Naive thymus-derived CD8-positive, alpha-beta T cell (primary cell): ENCODE measurements at regions of chr11 and their contacts with region 1.

Region 1: DNA sequence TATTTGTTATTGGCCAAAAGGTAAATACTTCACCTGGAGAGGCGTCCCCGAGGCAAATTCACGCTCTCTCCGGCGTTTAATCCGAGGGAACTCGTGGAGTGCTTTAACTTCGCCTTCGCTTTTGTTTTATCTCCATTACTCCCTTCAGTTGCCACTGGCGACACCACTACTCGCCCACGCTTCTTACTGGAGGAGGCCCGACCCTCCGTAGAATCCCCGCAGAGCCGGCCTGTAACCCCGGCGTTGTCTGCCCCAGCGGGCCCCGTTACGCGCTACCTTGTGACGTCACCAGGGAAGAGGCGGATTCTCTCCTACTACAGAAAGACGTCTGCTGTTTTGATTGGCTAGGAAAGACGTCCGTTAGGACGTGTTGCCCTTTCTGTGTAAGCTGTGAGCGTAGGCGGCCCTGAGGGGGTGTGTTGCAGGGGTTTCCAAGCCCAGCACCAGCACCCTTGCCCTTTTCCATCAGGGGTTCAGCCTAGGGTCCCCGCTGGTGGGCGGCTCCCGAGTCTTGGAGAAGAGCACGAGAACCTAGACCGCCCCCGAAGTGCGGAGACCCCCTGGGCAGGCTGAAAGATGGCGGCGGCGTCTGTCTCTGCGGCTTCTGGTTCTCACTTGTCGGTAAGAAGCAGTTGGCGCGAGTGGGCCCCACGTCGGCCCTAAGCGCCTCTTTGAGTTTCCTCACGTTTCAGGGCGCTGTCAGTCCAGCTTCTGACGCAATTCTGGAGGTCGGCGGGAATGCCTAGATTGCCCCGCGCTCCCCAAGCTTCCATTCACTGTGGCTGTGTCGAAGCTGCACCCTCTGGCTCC is at the start of gene CEP57:
- DNase-seq: peak in 9 of 10 donors; percentile 74 to 98 (median 93)
- ATAC-seq: peak; percentile 60 to 61
- H3K4me3 Mint-ChIP-seq: peak within 1 kb of the TSS; percentile 99 to 100 (median 100)
- H3K27ac Mint-ChIP-seq: peak within 1 kb of the TSS; percentile 99 to 100 (median 100)
- H3K4me1 Mint-ChIP-seq: peaks cover 24 to 66% (median 61%) of the 10 kb centered on the region in 4 donors
- H3K27me3 Mint-ChIP-seq: peaks cover 0 to 4% (median 0%) of the 10 kb centered on the region in 5 donors
- polyA plus RNA-seq, gene CEP57: 53.0 to 64.2 (median 60.8) TPM

Region 2: DNA sequence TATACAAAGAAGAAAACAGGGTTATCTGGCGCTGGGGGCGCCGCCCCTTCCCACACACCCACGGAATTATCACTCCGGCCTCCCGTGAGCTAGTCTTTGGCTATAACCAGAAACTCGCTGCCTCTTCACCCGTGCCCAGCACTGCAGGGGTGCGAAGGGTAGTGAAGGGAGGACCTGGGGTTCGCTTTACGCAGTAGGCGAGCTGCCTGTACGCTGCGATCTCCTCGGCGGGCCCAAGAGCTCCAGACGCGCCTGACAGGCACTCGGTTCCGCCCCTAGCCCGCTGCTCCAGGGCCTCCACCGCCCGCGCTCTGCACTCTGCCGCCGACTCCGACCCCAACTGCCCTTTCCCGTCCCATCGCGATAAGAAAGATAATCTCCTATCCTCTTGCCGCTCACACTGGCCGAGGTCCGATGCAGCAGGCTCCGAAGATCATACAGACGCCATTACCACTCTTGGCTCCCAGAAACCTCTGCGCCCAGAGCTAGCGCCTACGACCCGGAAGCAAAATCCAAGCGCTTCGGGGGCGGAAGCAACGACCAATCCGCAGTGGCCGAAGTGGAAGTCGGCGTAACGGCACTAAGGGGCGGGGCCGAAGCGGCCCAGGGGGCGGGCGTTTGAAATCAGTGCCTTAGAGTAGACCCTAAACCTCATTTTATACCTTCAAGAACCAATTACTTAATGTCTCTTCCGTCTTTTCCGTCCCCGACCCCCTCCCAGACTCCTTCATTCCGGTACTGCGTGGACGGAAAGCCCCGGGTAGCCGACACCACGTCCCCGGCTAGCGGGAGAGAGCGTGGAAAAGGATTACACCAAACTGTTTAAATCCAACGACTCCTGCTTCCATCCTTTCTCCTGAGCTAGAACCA is 817.0 kb before region 1 on chr11 and contains the starts of genes CWC15 and KDM4D:
- POLR2A ChIA-PET with region 1: interaction called, 21 read pairs
- DNase-seq: peak; percentile 89 to 98 (median 94)
- ATAC-seq: peak; percentile 97 to 98
- H3K4me3 Mint-ChIP-seq: peak within 1 kb of the TSS; percentile 94 to 100 (median 99)
- H3K27ac Mint-ChIP-seq: peak within 1 kb of the TSS; percentile 95 to 99 (median 99)
- H3K4me1 Mint-ChIP-seq: peaks cover 10 to 37% (median 26%) of the 10 kb centered on the region in 4 donors
- H3K27me3 Mint-ChIP-seq: peaks cover 0 to 1% (median 0%) of the 10 kb centered on the region in 5 donors
- polyA plus RNA-seq, gene CWC15: 47.6 to 61.3 (median 51.5) TPM
- polyA plus RNA-seq, gene KDM4D: 0.13 to 0.24 (median 0.17) TPM

Region 3: GRCh38 chr11:95150946-95151684 is 639.2 kb before region 1 on chr11:
- POLR2A ChIA-PET with region 1: interaction called, 28 read pairs
- DNase-seq: peak; percentile 81 to 95 (median 90)
- ATAC-seq: peak; percentile 91 to 96
- H3K4me3 Mint-ChIP-seq: peak overlapping the region; percentile 83 to 99 (median 90)
- H3K27ac Mint-ChIP-seq: peak overlapping the region; percentile 85 to 100 (median 96)
- H3K4me1 Mint-ChIP-seq: peaks cover 22 to 45% (median 32%) of the 10 kb centered on the region in 4 donors
- H3K27me3 Mint-ChIP-seq: peaks cover 3 to 11% (median 7%) of the 10 kb centered on the region in 5 donors

Region 4: GRCh38 chr11:96389720-96390487 is 599.6 kb after region 1 on chr11 and contains the starts of genes CCDC82 and JRKL:
- POLR2A ChIA-PET with region 1: interaction called, 23 read pairs
- DNase-seq: peak; percentile 95 to 99 (median 98)
- ATAC-seq: peak; percentile 91 to 93
- H3K4me3 Mint-ChIP-seq: peak within 1 kb of the TSS; percentile 83 to 97 (median 95)
- H3K27ac Mint-ChIP-seq: peak within 1 kb of the TSS; percentile 83 to 98 (median 96)
- H3K4me1 Mint-ChIP-seq: peaks cover 17 to 51% (median 43%) of the 10 kb centered on the region in 4 donors
- H3K27me3 Mint-ChIP-seq: no peaks in the 10 kb centered on the region
- polyA plus RNA-seq, gene CCDC82: 14.2 to 21.4 (median 18.0) TPM
- polyA plus RNA-seq, gene JRKL: 1.4 to 5.4 (median 2.8) TPM